ENCODE measurements at regions of chr9 and their contacts with region 1.

Region 1: DNA sequence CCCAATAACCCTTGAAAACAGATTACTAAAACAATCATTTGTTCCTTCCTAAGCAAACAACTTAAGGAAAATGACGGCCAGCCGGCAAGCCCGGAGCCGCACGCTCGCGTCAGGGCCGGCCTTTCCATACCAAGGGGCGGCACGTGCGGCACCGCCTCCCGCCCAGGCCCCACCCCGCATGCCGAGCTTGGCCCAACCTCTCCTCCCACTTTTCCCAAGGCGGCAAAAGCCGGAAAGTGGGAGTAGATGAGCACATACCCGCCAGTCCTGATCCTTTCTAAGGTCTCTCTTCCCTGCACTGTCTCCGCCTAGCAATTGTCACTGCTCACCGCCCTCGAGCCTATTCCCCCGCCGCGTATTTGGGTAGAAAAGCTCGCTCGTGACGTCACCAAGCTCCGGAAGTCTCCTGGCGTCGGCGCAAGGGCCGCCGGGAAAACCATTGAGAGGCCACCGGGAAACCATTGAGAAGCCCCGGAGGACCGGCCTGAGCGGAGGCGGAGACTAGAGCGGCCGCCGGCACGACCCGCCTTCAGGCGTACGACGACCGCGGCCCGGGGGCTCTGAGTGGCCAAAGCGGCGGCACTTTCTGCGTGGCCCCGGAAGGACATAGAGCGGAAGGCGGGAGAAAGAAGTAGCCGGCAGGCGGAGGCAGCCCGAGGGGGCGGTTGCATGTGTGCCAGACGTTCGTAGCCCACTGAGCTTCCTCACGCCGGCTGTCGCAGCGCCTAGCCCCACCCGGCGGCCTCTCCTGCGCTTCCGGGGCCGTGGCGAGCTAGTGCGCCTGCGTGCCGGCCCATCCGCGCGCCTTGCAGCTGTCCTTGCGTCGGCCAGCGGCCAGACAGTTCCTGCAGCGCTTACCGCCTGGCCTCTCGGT is at the starts of genes NCBP1 and TSTD2:
- DNase-seq: peak; percentile 93 to 98 (median 97)

Region 2: DNA sequence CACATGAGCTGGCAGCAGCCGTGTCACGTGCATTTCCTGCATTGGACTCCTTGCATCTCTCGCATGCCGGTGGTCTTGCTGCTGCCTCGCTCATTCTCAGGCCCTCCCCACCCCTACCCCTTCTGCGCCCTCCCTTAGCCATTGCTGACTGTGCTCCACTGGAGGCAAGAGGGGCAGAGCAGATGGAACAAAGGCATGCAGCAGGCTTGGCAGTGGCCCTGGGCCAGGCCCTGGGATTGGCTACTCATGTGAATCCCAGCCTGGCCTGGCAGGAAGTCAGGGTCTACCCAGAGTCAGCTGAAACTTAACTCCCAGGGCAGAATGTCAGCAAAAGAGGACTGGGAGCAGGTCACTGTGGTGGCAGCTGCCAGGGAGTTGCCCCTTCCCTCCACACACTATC is 62.3 kb before region 1 on chr9:
- intact Hi-C with region 1: no loop called
- DNase-seq: peak in 41 of 42 donors; percentile 51 to 88 (median 74)

Region 3: DNA sequence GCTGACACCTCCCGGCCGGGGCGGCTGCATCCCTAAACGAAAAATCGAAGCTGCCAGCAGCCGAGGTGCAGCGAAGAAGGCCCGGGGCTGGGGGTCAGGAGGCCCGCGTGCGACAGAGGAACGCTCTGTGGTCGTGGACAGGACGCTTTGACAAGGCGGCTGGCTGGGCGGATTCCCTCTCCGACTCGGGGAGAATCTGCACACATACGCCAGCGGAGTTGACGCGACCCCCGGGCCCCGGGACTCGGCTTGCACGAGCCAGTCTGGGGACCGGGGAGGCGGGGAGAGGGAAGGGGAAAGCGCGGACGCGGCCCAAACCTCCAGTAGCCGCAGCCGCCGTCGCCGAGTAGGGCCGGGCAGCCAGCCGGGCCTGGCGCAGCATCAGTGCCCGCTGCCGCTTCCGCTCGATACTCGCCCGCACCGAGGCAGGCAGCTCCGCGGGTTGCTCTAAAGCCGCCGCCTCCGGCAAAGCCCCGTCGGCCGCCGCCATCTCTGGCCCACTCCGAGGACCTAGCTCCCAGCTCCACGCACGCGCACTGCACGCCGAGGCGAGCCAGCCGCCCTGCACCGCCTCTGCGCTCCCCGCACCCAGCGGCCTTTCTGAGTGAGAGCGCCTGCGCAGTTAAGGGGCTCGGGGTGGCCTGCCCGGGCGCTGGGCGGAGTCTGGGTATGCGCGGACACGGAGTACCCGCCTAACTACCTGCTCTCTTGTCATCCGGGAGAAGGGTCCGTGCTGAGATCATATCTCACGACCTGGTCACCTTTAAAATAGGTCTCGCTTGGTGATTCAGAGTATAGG is 63.8 kb after region 1 on chr9 and contains the start of gene XPA:
- intact Hi-C with region 1: loop called (anchors 10 kb)
- DNase-seq: peak; percentile 83 to 99 (median 97)

Region 4: GRCh38 chr9:97910357-97910756 is 277.1 kb after region 1 on chr9:
- intact Hi-C with region 1: loop called (anchors 10 kb)
- DNase-seq: peak in 2 of 42 donors; percentile 35 to 42